ENCODE measurements at regions of chr11 and their contacts with region 1.

Region 1: DNA sequence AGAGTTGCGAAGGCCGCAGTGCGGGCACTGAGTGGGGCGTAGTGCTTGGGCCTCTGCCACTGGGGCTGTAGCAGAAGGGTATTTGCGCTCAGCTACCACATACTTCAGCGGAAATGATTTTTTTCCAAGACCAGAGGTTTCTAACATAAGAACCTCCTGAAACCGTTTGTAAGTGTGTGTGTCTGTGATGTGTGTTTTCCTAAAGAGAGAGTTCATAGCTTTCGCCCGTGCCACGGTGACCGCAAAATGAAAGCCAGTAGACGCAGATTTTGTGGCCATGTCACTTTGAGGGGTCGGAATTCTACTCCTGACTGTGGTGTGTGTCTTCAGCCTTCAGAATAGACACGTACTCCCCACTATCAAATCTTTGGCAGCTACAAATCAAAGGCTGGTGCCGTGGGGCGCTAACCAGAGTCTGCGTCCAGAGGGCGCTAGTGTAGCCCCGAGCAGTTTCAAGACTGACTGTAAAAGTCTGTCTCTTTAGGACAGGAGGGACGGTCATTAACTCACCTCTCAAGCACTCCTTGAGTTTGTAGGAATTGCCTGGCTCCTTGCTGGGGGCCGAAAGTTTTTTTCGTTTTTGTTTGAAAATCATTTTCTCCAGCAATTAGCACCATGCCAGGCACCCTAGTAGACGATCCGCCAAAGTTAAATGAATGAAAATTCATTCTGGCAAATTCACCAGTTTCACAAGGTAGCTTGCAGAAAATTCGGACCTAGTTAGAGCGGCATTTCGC is 2.5 kb upstream of the CALCA start:
- DNase-seq: peak; percentile 83
- H3K4me3 Mint-ChIP-seq: peak overlapping the region; percentile 69
- H3K27ac Mint-ChIP-seq: no peak overlapping the region
- H3K4me1 Mint-ChIP-seq: peaks cover 33% of the 10 kb centered on the region
- H3K27me3 Mint-ChIP-seq: peaks cover 61% of the 10 kb centered on the region

Region 2: GRCh38 chr11:14789879-14790484 is 184.7 kb before region 1 on chr11:
- CTCF ChIA-PET with region 1: no interaction called
- intact Hi-C with region 1: loop called (anchors 1 kb)
- DNase-seq: no peak
- H3K4me3 Mint-ChIP-seq: no peak overlapping the region
- H3K27ac Mint-ChIP-seq: no peak overlapping the region
- H3K4me1 Mint-ChIP-seq: peaks cover 6% of the 10 kb centered on the region
- H3K27me3 Mint-ChIP-seq: no peaks in the 10 kb centered on the region

Region 3: GRCh38 chr11:14949437-14950147 is 25.1 kb before region 1 on chr11:
- CTCF ChIA-PET with region 1: interaction called, 11 read pairs
- intact Hi-C with region 1: no loop called
- DNase-seq: no peak
- H3K4me3 Mint-ChIP-seq: no peak overlapping the region
- H3K27ac Mint-ChIP-seq: no peak overlapping the region
- H3K4me1 Mint-ChIP-seq: no peaks in the 10 kb centered on the region
- H3K27me3 Mint-ChIP-seq: no peaks in the 10 kb centered on the region

Region 4: DNA sequence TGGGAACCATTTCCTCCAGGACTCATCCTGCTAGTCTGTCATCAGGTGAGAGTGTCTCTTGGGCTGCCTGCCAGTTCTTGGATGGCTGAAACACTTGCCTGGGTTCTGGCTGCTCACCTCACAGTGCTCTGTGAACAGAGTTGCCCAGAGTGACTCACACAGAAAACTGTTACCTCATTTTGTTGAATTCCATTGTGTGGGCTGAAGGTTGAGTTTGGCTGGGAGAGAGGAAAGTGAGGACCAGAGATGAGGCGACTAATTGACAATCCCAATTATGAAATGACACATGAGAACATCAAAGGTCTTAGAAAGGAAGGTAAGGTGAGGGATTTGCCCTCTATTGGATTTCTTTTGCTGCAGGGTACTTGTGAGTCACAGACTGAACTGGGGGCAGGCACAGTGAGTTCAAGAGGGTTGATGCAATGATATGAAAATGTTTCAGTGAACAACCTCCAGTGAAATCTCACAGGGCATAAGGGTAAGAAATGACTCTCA is 78.6 kb after region 1 on chr11:
- CTCF ChIA-PET with region 1: interaction called, 4 read pairs
- intact Hi-C with region 1: loop called (anchors 1 kb)
- DNase-seq: peak; percentile 75
- H3K4me3 Mint-ChIP-seq: no peak overlapping the region
- H3K27ac Mint-ChIP-seq: peak overlapping the region; percentile 83
- H3K4me1 Mint-ChIP-seq: peaks cover 26% of the 10 kb centered on the region
- H3K27me3 Mint-ChIP-seq: peaks cover 2% of the 10 kb centered on the region

Region 5: GRCh38 chr11:16605894-16606783 is 1631.5 kb after region 1 on chr11:
- CTCF ChIA-PET with region 1: no interaction called
- intact Hi-C with region 1: loop called (anchors 10 kb)
- DNase-seq: peak; percentile 93
- H3K4me3 Mint-ChIP-seq: peak overlapping the region; percentile 56
- H3K27ac Mint-ChIP-seq: peak overlapping the region; percentile 15
- H3K4me1 Mint-ChIP-seq: peaks cover 20% of the 10 kb centered on the region
- H3K27me3 Mint-ChIP-seq: peaks cover 46% of the 10 kb centered on the region